ENCODE measurements at regions of chr19 and their contacts with region 1.

Region 1: GRCh38 chr19:56252699-56253422 is 19.7 kb upstream of the EDDM13 start:
- DNase-seq: peak; percentile 84
- H3K4me3 Mint-ChIP-seq: no peak overlapping the region
- H3K27ac Mint-ChIP-seq: no peak overlapping the region
- H3K4me1 Mint-ChIP-seq: no peaks in the 10 kb centered on the region
- H3K27me3 Mint-ChIP-seq: peaks cover 4% of the 10 kb centered on the region

Region 2: DNA sequence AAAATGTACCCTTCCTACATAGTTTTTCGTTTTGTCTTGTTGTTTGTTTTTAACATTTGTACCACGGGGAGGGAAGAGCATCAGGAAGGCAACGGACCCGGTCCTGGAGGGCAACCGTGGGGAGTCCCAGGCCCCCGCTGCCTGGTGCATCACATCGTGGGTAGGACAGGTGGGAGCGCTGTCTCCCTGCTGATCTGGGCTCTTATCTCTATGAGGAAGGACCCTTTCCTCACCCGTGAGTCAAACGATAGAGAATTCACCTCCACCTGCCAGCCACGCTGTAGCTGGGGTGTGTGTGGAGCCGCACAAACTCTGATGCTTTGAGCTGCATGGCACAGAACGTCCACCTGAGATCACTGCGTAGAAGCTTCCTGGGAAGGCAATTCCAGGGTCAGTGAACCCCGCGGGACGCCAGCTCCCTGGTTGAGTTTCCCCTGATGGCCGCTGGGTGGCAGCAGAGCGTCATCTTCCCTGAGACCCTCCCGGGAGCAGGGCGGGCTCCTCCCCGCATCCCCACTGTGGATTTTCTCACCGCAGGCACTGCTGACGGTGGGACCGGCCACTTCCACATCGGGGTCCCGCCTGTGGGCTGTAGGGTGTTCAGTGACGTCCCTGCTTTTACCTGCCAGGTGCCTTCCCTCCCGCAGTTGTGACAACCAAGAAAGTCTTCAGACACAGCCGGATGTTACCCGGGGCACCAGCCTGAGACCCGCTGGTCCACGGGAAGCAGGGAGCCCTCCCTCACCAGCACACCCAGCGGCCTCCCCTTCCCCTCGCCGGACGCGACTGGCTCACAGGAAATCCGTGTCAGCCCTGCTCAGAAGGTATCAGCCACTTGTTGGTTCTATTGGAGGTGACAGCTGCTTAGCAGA is 186.5 kb before region 1 on chr19:
- CTCF ChIA-PET with region 1: interaction called, 32 read pairs
- DNase-seq: peak; percentile 76
- H3K4me3 Mint-ChIP-seq: peak overlapping the region; percentile 59
- H3K27ac Mint-ChIP-seq: no peak overlapping the region
- H3K4me1 Mint-ChIP-seq: peaks cover 13% of the 10 kb centered on the region
- H3K27me3 Mint-ChIP-seq: peaks cover 19% of the 10 kb centered on the region

Region 3: DNA sequence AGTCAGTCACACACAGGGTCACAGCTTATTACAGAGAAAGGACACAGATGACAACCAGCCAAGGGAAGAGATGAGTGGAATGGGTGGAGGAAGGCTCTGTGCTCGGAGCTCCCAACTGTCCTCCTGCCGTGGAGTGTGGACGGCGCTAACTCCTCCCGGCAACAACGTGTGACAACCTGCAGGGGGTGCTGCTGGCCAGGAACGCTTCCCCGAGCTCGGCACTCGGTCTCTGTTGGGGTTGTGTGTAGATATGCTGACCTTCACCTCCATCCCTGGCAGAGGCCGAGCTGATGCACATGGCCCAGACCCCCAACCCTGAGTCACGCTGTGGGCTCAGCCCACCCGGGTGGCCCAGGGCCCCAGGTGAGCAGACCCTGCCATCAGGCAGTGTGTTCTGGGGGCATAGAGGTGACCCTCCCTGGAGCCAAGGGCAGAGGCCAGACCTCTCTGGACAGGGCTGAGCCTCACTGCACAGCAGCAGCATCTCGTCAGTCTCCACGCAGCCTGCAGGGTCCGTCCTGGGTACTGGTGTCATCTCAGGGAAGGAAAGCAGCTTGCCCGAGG is 97.7 kb before region 1 on chr19:
- CTCF ChIA-PET with region 1: interaction called, 14 read pairs
- DNase-seq: no peak
- H3K4me3 Mint-ChIP-seq: no peak overlapping the region
- H3K27ac Mint-ChIP-seq: no peak overlapping the region
- H3K4me1 Mint-ChIP-seq: peaks cover 12% of the 10 kb centered on the region
- H3K27me3 Mint-ChIP-seq: no peaks in the 10 kb centered on the region

Region 4: DNA sequence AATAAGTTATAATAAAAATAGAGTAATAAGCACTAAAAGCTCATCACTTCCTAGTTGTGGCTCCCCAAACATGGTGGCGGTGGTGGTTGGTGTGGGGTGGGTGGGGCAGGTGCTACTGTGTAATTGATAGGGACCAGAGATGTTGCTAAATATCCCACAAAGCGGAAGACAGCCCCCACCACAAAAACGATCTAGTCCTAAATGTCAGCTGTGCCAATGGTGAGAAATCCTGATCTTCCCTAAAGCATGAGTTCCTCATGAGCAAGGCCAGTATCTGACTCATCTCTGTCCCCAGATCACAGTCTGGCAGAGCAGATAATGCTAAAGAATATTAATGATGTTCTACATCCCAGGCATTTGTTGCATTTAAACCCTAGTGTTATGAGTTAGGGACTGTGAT is 17.8 kb after region 1 on chr19:
- CTCF ChIA-PET with region 1: interaction called, 10 read pairs
- DNase-seq: no peak
- H3K4me3 Mint-ChIP-seq: no peak overlapping the region
- H3K27ac Mint-ChIP-seq: no peak overlapping the region
- H3K4me1 Mint-ChIP-seq: no peaks in the 10 kb centered on the region
- H3K27me3 Mint-ChIP-seq: no peaks in the 10 kb centered on the region

Region 5: GRCh38 chr19:56333505-56333904 is 80.6 kb after region 1 on chr19:
- CTCF ChIA-PET with region 1: interaction called, 98 read pairs
- DNase-seq: peak; percentile 69
- H3K4me3 Mint-ChIP-seq: no peak overlapping the region
- H3K27ac Mint-ChIP-seq: no peak overlapping the region
- H3K4me1 Mint-ChIP-seq: no peaks in the 10 kb centered on the region
- H3K27me3 Mint-ChIP-seq: no peaks in the 10 kb centered on the region